Activated CD8-positive, alpha-beta T cell treated with anti-CD3 and anti-CD28 coated beads, Interleukin-2, amount 10 ng/mL, durations not matched to agents 7 days and 5 days (primary cell): ENCODE measurements at regions of chr7 and their contacts with region 1.

Region 1: GRCh38 chr7:102404005-102404861 is 8.1 kb downstream of the PRKRIP1 start:
- DNase-seq: peak; percentile 63
- ATAC-seq: peak; percentile 95
- H3K4me3 Mint-ChIP-seq: no peak overlapping the region
- H3K27ac Mint-ChIP-seq: no peak overlapping the region
- H3K4me1 Mint-ChIP-seq: peaks cover 14% of the 10 kb centered on the region
- H3K27me3 Mint-ChIP-seq: no peaks in the 10 kb centered on the region

Region 2: GRCh38 chr7:102169651-102170392 is 234.4 kb before region 1 on chr7:
- CTCF ChIA-PET with region 1: no interaction called
- POLR2A ChIA-PET with region 1: no interaction called
- DNase-seq: no peak
- ATAC-seq: no peak
- H3K4me3 Mint-ChIP-seq: no peak overlapping the region
- H3K27ac Mint-ChIP-seq: no peak overlapping the region
- H3K4me1 Mint-ChIP-seq: no peaks in the 10 kb centered on the region
- H3K27me3 Mint-ChIP-seq: no peaks in the 10 kb centered on the region

Region 3: DNA sequence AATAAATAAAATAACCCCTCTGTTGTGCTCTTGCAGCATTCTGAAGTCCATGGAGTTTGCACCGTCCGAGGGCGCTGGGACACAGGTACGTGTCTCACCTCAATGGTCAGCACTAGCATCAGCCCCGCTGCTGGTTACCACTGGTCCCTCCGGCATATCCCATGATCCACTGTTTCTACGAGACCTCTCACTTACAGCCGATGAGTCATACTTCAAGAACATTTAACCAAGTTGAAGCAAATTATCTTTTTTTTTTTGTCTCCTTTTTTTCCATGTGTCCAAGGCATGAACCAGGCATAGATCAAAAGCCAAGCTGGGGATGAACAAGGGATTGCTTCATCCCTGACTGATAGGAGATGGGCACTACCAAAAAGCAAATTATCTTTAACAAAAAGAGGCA is 210.4 kb before region 1 on chr7:
- CTCF ChIA-PET with region 1: no interaction called
- POLR2A ChIA-PET with region 1: no interaction called
- DNase-seq: no peak
- ATAC-seq: no peak
- H3K4me3 Mint-ChIP-seq: no peak overlapping the region
- H3K27ac Mint-ChIP-seq: no peak overlapping the region
- H3K4me1 Mint-ChIP-seq: no peaks in the 10 kb centered on the region
- H3K27me3 Mint-ChIP-seq: no peaks in the 10 kb centered on the region

Region 4: GRCh38 chr7:102425639-102426267 is 21.5 kb after region 1 on chr7:
- CTCF ChIA-PET with region 1: interaction called, 19 read pairs
- POLR2A ChIA-PET with region 1: interaction called, 13 read pairs
- DNase-seq: peak; percentile 89
- ATAC-seq: peak; percentile 84
- H3K4me3 Mint-ChIP-seq: peak overlapping the region; percentile 79
- H3K27ac Mint-ChIP-seq: peak overlapping the region; percentile 99
- H3K4me1 Mint-ChIP-seq: peaks cover 79% of the 10 kb centered on the region
- H3K27me3 Mint-ChIP-seq: no peaks in the 10 kb centered on the region

Region 5: GRCh38 chr7:102433219-102434038 is 29.2 kb after region 1 on chr7 and contains the start of gene ORAI2:
- CTCF ChIA-PET with region 1: interaction called, 33 read pairs
- POLR2A ChIA-PET with region 1: no interaction called
- DNase-seq: peak; percentile 88
- ATAC-seq: peak; percentile 71
- H3K4me3 Mint-ChIP-seq: peak within 1 kb of the TSS; percentile 88
- H3K27ac Mint-ChIP-seq: peak within 1 kb of the TSS; percentile 87
- H3K4me1 Mint-ChIP-seq: peaks cover 68% of the 10 kb centered on the region
- H3K27me3 Mint-ChIP-seq: no peaks in the 10 kb centered on the region
- total RNA-seq, gene ORAI2: 72.5 to 72.8 TPM

Region 6: DNA sequence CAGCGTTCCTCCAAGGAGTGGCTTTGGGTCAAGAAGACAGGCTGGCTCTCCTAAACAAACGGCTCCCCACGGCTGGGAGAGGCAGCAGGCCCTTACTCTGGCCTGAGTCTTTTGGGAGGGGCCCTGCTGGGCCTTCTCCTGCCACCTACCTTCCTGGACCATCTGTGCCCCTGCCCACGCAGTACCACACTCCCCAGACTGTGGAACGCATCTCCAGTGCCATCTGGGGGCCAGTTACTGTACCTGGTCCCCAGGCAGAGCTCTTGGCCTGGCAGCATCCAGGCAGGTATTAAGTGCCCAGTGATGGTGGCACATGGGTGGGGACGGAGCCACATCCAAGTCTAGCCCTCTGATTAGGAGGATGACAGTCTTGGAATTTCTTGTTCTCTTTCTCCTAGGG is 46.0 kb after region 1 on chr7:
- CTCF ChIA-PET with region 1: interaction called, 44 read pairs
- POLR2A ChIA-PET with region 1: interaction called, 4 read pairs
- DNase-seq: peak; percentile 52
- ATAC-seq: peak; percentile 52
- H3K4me3 Mint-ChIP-seq: no peak overlapping the region
- H3K27ac Mint-ChIP-seq: no peak overlapping the region
- H3K4me1 Mint-ChIP-seq: no peaks in the 10 kb centered on the region
- H3K27me3 Mint-ChIP-seq: no peaks in the 10 kb centered on the region

Region 7: DNA sequence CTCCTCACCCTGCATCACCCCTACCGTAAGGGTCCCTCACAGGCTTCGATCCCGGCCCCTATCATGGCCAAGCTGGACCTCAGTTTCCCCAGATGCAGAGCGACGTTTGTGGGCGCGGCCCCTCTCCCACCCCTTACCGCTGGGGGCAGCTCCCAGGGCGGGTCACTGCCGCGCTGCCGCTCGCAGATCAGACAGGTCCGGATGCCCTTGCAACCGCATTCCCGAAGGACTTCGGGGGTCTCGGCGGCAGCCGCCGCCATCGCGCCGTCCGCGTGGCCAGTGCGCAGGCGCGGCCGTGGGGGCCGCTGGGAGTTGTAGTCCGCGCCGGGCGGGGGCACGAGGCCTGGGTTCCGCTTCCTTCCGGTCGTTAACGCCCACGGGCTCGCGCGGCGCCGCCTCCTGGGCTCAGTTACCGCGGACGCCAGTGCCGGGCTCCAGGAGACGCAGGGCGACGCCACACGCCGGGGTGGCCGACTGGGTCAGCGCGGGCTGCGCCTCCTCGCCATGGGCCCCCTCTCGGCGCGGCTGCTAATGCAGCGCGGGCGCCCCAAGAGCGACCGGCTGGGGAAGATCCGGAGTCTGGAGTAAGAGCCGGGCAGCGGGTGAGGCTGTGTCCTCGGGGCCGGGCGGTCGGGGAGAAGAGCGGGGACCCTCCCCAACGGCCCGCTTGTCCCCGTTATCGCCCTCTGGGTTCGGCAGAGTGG is 60.5 kb after region 1 on chr7 and contains the starts of genes ALKBH4 and LRWD1:
- CTCF ChIA-PET with region 1: interaction called, 10 read pairs
- POLR2A ChIA-PET with region 1: interaction called, 4 read pairs
- DNase-seq: peak; percentile 94
- ATAC-seq: peak; percentile 94
- H3K4me3 Mint-ChIP-seq: peak within 1 kb of the TSS; percentile 95
- H3K27ac Mint-ChIP-seq: peak within 1 kb of the TSS; percentile 87
- H3K4me1 Mint-ChIP-seq: peaks cover 26% of the 10 kb centered on the region
- H3K27me3 Mint-ChIP-seq: no peaks in the 10 kb centered on the region
- total RNA-seq, gene ALKBH4: 10.8 to 11.1 TPM
- total RNA-seq, gene LRWD1: 16.7 to 21.7 TPM